ENCODE measurements at regions of chr3 and their contacts with region 1.

Region 1: DNA sequence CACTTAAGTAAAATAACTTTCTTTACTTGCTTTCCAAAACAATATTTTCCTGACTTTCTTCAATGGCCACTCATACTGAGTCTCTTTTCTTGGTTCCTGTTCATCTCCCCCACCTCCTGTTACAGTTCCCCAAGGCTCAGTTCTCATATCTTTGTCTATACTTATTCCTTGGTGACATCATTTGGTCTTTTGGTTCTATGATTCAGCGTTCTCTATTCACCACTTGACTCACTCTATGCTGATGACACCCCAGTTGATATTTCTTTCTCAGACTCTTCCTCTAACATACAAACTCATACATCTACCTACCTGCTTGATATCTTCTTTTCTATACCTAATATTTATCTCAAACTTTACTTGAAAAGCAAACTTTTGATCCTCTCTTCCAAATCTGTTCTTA is 85.0 kb upstream of the P3H2 start:
- DNase-seq: peak; percentile 53
- ATAC-seq: no peak; the same call in 1 of the 2 replicates
- H3K4me3 ChIP-seq: no peak overlapping the region
- H3K27ac ChIP-seq: no peak overlapping the region
- H3K4me1 ChIP-seq: peaks cover 9% of the 10 kb centered on the region; the same call in 1 of the 2 replicates
- H3K27me3 ChIP-seq: no peaks in the 10 kb centered on the region
- CTCF ChIP-seq: no peak

Region 2: GRCh38 chr3:189961525-189962161 is 244.1 kb before region 1 on chr3:
- CTCF ChIA-PET with region 1: no interaction called
- POLR2A ChIA-PET with region 1: no interaction called
- intact Hi-C with region 1: loop called (anchors 1 kb)
- DNase-seq: peak; percentile 95
- ATAC-seq: peak; percentile 82
- H3K4me3 ChIP-seq: no peak overlapping the region
- H3K27ac ChIP-seq: no peak overlapping the region
- H3K4me1 ChIP-seq: peaks cover 4% of the 10 kb centered on the region; the same call in 1 of the 2 replicates
- H3K27me3 ChIP-seq: no peaks in the 10 kb centered on the region
- CTCF ChIP-seq: peak; percentile 95

Region 3: GRCh38 chr3:190120269-190121060 is 85.3 kb before region 1 on chr3 and contains the start of gene P3H2:
- CTCF ChIA-PET with region 1: interaction called, 9 read pairs
- POLR2A ChIA-PET with region 1: no interaction called
- intact Hi-C with region 1: loop called (anchors 1 kb)
- DNase-seq: peak; percentile 92
- ATAC-seq: peak; percentile 99
- H3K4me3 ChIP-seq: peak within 1 kb of the TSS; percentile 89
- H3K27ac ChIP-seq: no peak within 1 kb of the TSS
- H3K4me1 ChIP-seq: peaks cover 4% of the 10 kb centered on the region
- H3K27me3 ChIP-seq: no peaks in the 10 kb centered on the region
- CTCF ChIP-seq: peak; percentile 64
- total RNA-seq, gene P3H2: 4.5 and 11.4 TPM in 2 replicates

Region 4: GRCh38 chr3:190339130-190339529 is 133.4 kb after region 1 on chr3:
- CTCF ChIA-PET with region 1: no interaction called
- POLR2A ChIA-PET with region 1: no interaction called
- intact Hi-C with region 1: no loop called
- DNase-seq: peak; percentile 49
- ATAC-seq: peak; percentile 76
- H3K4me3 ChIP-seq: no peak overlapping the region
- H3K27ac ChIP-seq: peak overlapping the region; percentile 12; the same call in 1 of the 2 replicates
- H3K4me1 ChIP-seq: peaks cover 12% of the 10 kb centered on the region
- H3K27me3 ChIP-seq: no peaks in the 10 kb centered on the region
- CTCF ChIP-seq: peak; percentile 50

Region 5: GRCh38 chr3:190504354-190505125 is 298.8 kb after region 1 on chr3:
- CTCF ChIA-PET with region 1: no interaction called
- POLR2A ChIA-PET with region 1: no interaction called
- intact Hi-C with region 1: no loop called
- DNase-seq: no peak
- ATAC-seq: peak; percentile 61; the same call in 1 of the 2 replicates
- H3K4me3 ChIP-seq: no peak overlapping the region
- H3K27ac ChIP-seq: no peak overlapping the region
- H3K4me1 ChIP-seq: peaks cover 4% of the 10 kb centered on the region
- H3K27me3 ChIP-seq: no peaks in the 10 kb centered on the region
- CTCF ChIP-seq: peak; percentile 40; the same call in 1 of the 2 replicates